PC-3 (cell line): ENCODE measurements at regions of chr5 and their contacts with region 1.

Region 1: GRCh38 chr5:63170486-63170885 is 591.9 kb downstream of the LRRC70 start:
- DNase-seq: no peak
- ATAC-seq: peak; percentile 35; the same call in 1 of the 2 replicates
- H3K4me3 ChIP-seq: no peak overlapping the region
- H3K27ac ChIP-seq: no peak overlapping the region
- H3K4me1 ChIP-seq: no peaks in the 10 kb centered on the region
- H3K27me3 ChIP-seq: no peaks in the 10 kb centered on the region
- CTCF ChIP-seq: no peak

Region 2: DNA sequence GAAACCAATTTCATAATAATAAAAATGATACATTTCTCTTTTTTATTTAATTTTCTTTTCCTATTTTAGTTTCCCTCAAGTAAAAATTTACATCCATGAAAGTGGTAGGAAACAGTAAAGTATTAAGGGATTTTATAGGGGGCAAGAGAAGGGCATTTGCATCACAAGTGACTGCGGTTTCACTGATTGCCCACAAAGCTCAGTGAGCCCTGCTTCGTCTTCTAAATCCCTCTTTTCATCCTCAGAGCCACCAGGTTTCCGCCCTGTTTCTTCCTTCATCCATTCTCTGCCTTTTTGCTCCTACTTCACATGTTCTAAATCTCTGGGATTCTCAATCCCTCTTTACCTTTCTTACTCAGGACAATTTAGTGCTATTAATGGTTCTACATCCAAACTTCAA is 100.5 kb before region 1 on chr5:
- CTCF ChIA-PET with region 1: no interaction called
- POLR2A ChIA-PET with region 1: no interaction called
- intact Hi-C with region 1: no loop called
- DNase-seq: no peak
- ATAC-seq: no peak
- H3K4me3 ChIP-seq: no peak overlapping the region
- H3K27ac ChIP-seq: no peak overlapping the region
- H3K4me1 ChIP-seq: no peaks in the 10 kb centered on the region
- H3K27me3 ChIP-seq: no peaks in the 10 kb centered on the region
- CTCF ChIP-seq: no peak

Region 3: DNA sequence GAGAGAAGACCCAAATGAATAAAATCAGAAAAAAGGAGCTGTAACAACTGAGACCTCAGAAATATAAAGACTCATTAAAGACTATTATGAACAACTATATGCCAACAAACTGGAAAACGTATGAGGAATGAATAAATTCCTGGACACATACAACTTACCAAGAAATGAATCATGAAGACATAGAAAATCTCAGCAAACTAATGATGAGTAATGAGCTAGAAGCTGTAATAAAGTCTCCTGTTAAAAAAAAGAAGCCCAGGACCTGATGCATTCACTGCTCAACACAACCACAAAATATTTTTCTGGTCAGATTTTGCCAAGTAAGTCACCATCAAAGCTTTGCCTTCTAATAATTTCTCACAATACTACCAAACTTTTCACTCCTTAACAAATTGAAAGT is 74.8 kb after region 1 on chr5:
- CTCF ChIA-PET with region 1: no interaction called
- POLR2A ChIA-PET with region 1: no interaction called
- intact Hi-C with region 1: loop called (anchors 5 kb)
- DNase-seq: peak; percentile 60
- ATAC-seq: peak; percentile 65
- H3K4me3 ChIP-seq: no peak overlapping the region
- H3K27ac ChIP-seq: 0 out of 2 replicates have a peak overlapping the region, but pooled peaks have one; percentile 23
- H3K4me1 ChIP-seq: peaks cover 15% of the 10 kb centered on the region; the same call in 1 of the 2 replicates
- H3K27me3 ChIP-seq: no peaks in the 10 kb centered on the region
- CTCF ChIP-seq: no peak